ENCODE measurements at regions of chr15 and their contacts with region 1.

Region 1: GRCh38 chr15:56821721-56822425 is 88.6 kb upstream of the ZNF280D start:
- DNase-seq: peak; percentile 35 to 53
- H3K4me3 ChIP-seq: no peak overlapping the region
- H3K27ac ChIP-seq: no peak overlapping the region
- H3K4me1 ChIP-seq: peaks cover 8% of the 10 kb centered on the region; the same call in 1 of the 2 replicates
- H3K27me3 ChIP-seq: no peaks in the 10 kb centered on the region
- CTCF ChIP-seq: peak; percentile 74

Region 2: GRCh38 chr15:56524915-56525314 is 297.0 kb before region 1 on chr15:
- CTCF ChIA-PET with region 1: no interaction called
- POLR2A ChIA-PET with region 1: no interaction called
- intact Hi-C with region 1: no loop called
- DNase-seq: no peak
- H3K4me3 ChIP-seq: no peak overlapping the region
- H3K27ac ChIP-seq: no peak overlapping the region
- H3K4me1 ChIP-seq: no peaks in the 10 kb centered on the region
- H3K27me3 ChIP-seq: peaks cover 13% of the 10 kb centered on the region
- CTCF ChIP-seq: no peak

Region 3: DNA sequence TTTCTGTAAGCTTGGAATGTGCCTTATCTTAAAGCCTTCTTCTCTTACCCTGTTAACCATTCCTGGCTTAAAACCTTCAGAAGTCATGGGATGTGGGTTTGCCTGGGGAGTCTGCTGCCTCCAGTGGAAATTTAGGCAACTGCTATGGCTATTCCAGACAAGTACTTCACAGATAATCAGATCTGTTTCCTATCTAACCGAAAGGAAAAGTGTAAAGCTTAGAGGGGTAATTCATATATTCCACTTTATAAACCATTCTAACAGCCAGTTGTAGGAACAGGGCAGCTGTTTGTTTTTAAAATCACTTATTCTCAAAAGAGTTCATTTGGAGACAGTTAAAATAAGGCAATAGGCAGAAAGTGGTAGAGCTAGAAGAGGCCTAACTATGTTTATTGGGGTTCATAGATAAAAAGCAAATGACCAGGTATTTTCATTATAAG is 316.5 kb after region 1 on chr15:
- CTCF ChIA-PET with region 1: no interaction called
- POLR2A ChIA-PET with region 1: no interaction called
- intact Hi-C with region 1: loop called (anchors 5 kb)
- DNase-seq: peak in 1 of 2 experiments; percentile 9
- H3K4me3 ChIP-seq: no peak overlapping the region
- H3K27ac ChIP-seq: no peak overlapping the region
- H3K4me1 ChIP-seq: no peaks in the 10 kb centered on the region
- H3K27me3 ChIP-seq: no peaks in the 10 kb centered on the region
- CTCF ChIP-seq: peak; percentile 74

Region 4: GRCh38 chr15:57213862-57214261 is 392.0 kb after region 1 on chr15:
- CTCF ChIA-PET with region 1: interaction called, 3 read pairs
- POLR2A ChIA-PET with region 1: no interaction called
- intact Hi-C with region 1: loop called (anchors 2 kb)
- DNase-seq: no peak
- H3K4me3 ChIP-seq: no peak overlapping the region
- H3K27ac ChIP-seq: no peak overlapping the region
- H3K4me1 ChIP-seq: no peaks in the 10 kb centered on the region; the same call in 1 of the 2 replicates
- H3K27me3 ChIP-seq: no peaks in the 10 kb centered on the region
- CTCF ChIP-seq: peak; percentile 37; the same call in 1 of the 2 replicates

Region 5: GRCh38 chr15:57306161-57306943 is 484.5 kb after region 1 on chr15:
- CTCF ChIA-PET with region 1: no interaction called
- POLR2A ChIA-PET with region 1: no interaction called
- intact Hi-C with region 1: loop called (anchors 1 kb)
- DNase-seq: peak in 1 of 2 experiments; percentile 78
- H3K4me3 ChIP-seq: no peak overlapping the region; the same call in 1 of the 2 replicates
- H3K27ac ChIP-seq: no peak overlapping the region
- H3K4me1 ChIP-seq: no peaks in the 10 kb centered on the region
- H3K27me3 ChIP-seq: no peaks in the 10 kb centered on the region
- CTCF ChIP-seq: peak; percentile 78

Region 6: GRCh38 chr15:57611938-57612337 is 790.1 kb after region 1 on chr15:
- CTCF ChIA-PET with region 1: no interaction called
- POLR2A ChIA-PET with region 1: no interaction called
- intact Hi-C with region 1: no loop called
- DNase-seq: peak; percentile 81 to 87
- H3K4me3 ChIP-seq: no peak overlapping the region
- H3K27ac ChIP-seq: peak overlapping the region; percentile 85
- H3K4me1 ChIP-seq: peaks cover 36% of the 10 kb centered on the region
- H3K27me3 ChIP-seq: no peaks in the 10 kb centered on the region
- CTCF ChIP-seq: peak; percentile 68

Measured in PC-9 (cell line).